SK-N-SH (cell line): ENCODE measurements at regions of chr6 and their contacts with region 1.

Region 1: DNA sequence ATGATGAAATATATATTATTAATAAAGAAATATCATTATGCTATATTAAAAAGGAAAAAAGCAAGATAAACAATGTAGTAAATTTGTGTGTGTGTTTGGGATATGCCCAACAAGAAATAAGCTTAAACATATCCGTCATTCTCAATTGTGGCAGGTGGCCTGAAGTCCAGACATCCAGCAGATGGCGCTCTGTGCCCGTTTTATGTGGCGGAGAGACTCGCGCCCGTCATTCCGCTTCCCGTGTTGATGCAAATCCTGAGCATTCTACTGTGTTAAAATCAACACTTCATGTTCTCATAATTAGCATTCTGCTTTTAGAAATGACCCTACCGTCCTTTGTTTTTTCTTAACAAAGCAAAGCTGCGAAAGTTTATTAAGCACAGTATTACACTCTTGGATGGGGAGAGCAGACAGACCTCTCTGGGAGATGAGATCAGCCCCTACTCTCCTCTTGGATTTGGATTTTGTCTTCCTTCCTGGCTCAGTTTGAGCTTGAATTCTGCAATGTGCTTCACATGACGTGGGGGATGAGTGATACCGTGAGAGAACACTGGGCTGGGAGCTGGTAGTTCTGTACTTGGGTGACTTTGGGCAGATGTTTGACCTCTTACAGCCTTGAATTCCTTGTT is 125.8 kb downstream of the MCHR2 start:
- DNase-seq: peak; percentile 50
- H3K4me3 ChIP-seq: peak overlapping the region in 1 of 2 experiments; percentile 48; a peak in 2 of 4 replicates
- H3K27ac ChIP-seq: no peak overlapping the region
- H3K4me1 ChIP-seq: no peaks in the 10 kb centered on the region
- H3K27me3 ChIP-seq: peaks cover 22% of the 10 kb centered on the region; the same call in 1 of the 2 replicates
- CTCF ChIP-seq: peak; percentile 93
- EP300 ChIP-seq: no peak
- RAD21 ChIP-seq: peak; percentile 83

Region 2: DNA sequence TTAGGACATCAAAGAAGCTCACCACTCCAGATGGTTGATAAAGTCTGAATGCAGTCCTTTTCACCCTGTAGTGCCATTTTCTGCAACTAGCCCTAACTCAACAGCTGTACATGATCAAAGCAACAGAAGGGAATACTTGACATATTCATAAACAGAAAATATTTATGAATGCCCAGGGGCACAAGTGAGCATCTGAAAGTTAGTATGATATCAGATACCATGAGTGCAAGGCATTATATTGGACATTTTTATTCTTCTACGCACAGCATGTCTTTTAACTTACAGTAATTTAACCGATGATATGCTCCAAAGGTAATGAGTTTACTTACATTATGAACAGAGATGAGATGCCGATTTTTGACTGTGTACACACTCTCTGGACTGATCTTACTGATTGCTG is 16.2 kb before region 1 on chr6:
- CTCF ChIA-PET with region 1: interaction called, 38 read pairs
- POLR2A ChIA-PET with region 1: no interaction called
- DNase-seq: no peak
- H3K4me3 ChIP-seq: no peak overlapping the region
- H3K27ac ChIP-seq: no peak overlapping the region
- H3K4me1 ChIP-seq: no peaks in the 10 kb centered on the region
- H3K27me3 ChIP-seq: 0 out of 2 replicates have a peak, but pooled peaks cover 4% of the 10 kb centered on the region
- CTCF ChIP-seq: no peak
- EP300 ChIP-seq: no peak
- RAD21 ChIP-seq: no peak

Region 3: GRCh38 chr6:99894815-99895214 is 26.6 kb after region 1 on chr6:
- CTCF ChIA-PET with region 1: interaction called, 36 read pairs
- POLR2A ChIA-PET with region 1: no interaction called
- DNase-seq: no peak
- H3K4me3 ChIP-seq: no peak overlapping the region
- H3K27ac ChIP-seq: no peak overlapping the region
- H3K4me1 ChIP-seq: no peaks in the 10 kb centered on the region
- H3K27me3 ChIP-seq: no peaks in the 10 kb centered on the region
- CTCF ChIP-seq: no peak
- EP300 ChIP-seq: no peak
- RAD21 ChIP-seq: no peak

Region 4: DNA sequence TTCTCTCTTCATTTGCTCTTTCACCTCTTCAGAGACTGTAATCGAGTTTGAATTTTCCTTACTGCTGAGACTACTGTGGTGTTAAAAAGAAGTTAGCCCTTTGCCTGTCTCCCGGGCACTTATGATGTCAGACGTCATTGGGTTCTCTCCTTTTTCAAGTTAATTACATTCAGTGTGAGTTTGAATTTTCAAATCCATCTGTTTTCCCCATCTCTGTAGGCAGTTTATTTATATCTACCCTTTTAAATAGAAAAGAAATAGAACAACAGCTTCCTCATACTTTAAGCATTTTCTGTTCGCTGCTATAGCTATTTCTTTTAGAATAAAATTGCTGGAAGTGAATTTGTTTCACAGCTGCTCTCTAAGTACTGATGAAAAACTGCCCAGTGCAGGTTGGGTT is 44.5 kb after region 1 on chr6:
- CTCF ChIA-PET with region 1: interaction called, 12 read pairs
- POLR2A ChIA-PET with region 1: no interaction called
- DNase-seq: no peak
- H3K4me3 ChIP-seq: no peak overlapping the region
- H3K27ac ChIP-seq: no peak overlapping the region
- H3K4me1 ChIP-seq: no peaks in the 10 kb centered on the region
- H3K27me3 ChIP-seq: peaks cover 13% of the 10 kb centered on the region; the same call in 1 of the 2 replicates
- CTCF ChIP-seq: no peak
- EP300 ChIP-seq: no peak
- RAD21 ChIP-seq: no peak

Region 5: GRCh38 chr6:100105138-100105753 is 237.1 kb after region 1 on chr6:
- CTCF ChIA-PET with region 1: interaction called, 61 read pairs
- POLR2A ChIA-PET with region 1: no interaction called
- DNase-seq: no peak
- H3K4me3 ChIP-seq: no peak overlapping the region
- H3K27ac ChIP-seq: no peak overlapping the region
- H3K4me1 ChIP-seq: no peaks in the 10 kb centered on the region
- H3K27me3 ChIP-seq: peaks cover 42% of the 10 kb centered on the region
- CTCF ChIP-seq: no peak
- EP300 ChIP-seq: no peak
- RAD21 ChIP-seq: no peak

Region 6: DNA sequence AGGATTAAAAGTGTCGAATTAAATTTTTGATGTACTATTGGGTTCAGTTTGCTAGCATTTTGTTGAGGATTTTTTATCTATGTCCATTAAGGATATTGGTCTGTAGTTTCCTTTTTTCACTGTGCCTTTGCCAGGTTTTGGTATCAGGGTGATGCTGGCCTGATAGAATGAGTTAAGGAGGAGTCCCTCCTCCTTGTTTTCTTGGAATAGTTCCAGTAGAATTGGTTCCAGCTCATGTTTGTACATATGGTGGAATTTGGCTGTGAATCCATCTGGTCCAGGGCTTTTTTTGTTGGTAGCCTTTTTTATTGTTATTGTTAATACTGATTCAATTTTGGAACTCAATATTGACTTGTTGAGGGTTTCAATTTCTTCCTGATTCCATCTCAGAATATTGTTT is 454.7 kb after region 1 on chr6:
- CTCF ChIA-PET with region 1: no interaction called
- POLR2A ChIA-PET with region 1: no interaction called
- DNase-seq: no peak
- H3K4me3 ChIP-seq: no peak overlapping the region
- H3K27ac ChIP-seq: no peak overlapping the region
- H3K4me1 ChIP-seq: no peaks in the 10 kb centered on the region
- H3K27me3 ChIP-seq: no peaks in the 10 kb centered on the region
- CTCF ChIP-seq: no peak
- EP300 ChIP-seq: no peak
- RAD21 ChIP-seq: no peak